ENCODE measurements at regions of chrX and their contacts with region 1.

Region 1: GRCh38 chrX:45843518-45843917 is 642.8 kb upstream of the DIPK2B start:
- DNase-seq: no peak
- ATAC-seq: no peak
- H3K4me3 Mint-ChIP-seq: peak overlapping the region; percentile 36
- H3K27ac Mint-ChIP-seq: peak overlapping the region; percentile 77
- H3K4me1 Mint-ChIP-seq: peaks cover 54% of the 10 kb centered on the region
- H3K27me3 Mint-ChIP-seq: no peaks in the 10 kb centered on the region

Region 2: DNA sequence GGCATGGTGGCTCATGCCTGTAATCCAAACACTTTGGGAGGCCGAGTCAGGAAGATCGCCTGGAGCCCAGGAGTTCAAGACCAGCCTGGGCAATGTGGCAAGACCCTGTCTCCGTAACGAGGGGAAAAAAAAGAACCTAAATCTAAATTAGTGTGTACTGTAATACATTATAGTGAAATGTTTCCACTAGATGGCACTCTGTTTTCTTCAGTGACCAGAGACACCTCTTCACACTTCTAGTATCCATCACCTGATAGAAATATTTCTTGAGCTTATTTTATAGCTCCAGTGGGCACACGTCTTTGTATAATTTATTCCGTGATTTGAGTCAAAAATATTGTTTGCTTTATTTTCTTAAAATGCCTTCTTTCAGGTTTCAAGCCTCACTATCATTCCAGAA is 42.0 kb before region 1 on chrX:
- CTCF ChIA-PET with region 1: interaction called, 4 read pairs
- POLR2A ChIA-PET with region 1: interaction called, 5 read pairs
- intact Hi-C with region 1: loop called in 1 of 2 experiments (anchors 2 kb)
- DNase-seq: no peak
- ATAC-seq: peak; percentile 55
- H3K4me3 Mint-ChIP-seq: peak overlapping the region; percentile 63
- H3K27ac Mint-ChIP-seq: peak overlapping the region; percentile 92
- H3K4me1 Mint-ChIP-seq: peaks cover 71% of the 10 kb centered on the region
- H3K27me3 Mint-ChIP-seq: no peaks in the 10 kb centered on the region

Region 3: GRCh38 chrX:45824471-45824870 is 19.0 kb before region 1 on chrX:
- CTCF ChIA-PET with region 1: interaction called, 4 read pairs
- POLR2A ChIA-PET with region 1: interaction called, 3 read pairs
- intact Hi-C with region 1: loop called in 1 of 2 experiments (anchors 2 kb)
- DNase-seq: peak; percentile 78
- ATAC-seq: peak; percentile 96
- H3K4me3 Mint-ChIP-seq: no peak overlapping the region
- H3K27ac Mint-ChIP-seq: peak overlapping the region; percentile 93
- H3K4me1 Mint-ChIP-seq: peaks cover 57% of the 10 kb centered on the region
- H3K27me3 Mint-ChIP-seq: no peaks in the 10 kb centered on the region

Region 4: DNA sequence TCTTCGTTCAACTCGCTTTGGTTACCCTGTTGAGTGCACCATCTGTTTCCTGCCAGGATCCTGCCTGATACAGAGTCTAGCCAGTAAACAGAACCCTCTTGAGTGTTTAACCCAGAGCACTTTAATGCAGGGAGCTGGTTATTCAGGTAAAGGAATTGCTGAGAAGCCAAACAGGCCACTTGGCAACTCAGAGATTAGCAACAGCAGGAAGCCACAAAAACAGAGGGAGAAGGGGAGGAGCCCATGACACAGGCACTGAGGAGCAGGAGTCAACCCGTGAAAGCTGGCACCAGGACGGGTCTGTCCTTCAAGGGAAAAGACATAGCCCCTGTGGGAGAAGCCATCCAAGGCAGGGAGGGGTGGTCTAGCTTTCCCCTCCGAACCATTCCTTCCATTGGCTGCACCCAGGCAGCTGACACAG is 60.3 kb after region 1 on chrX:
- CTCF ChIA-PET with region 1: no interaction called
- POLR2A ChIA-PET with region 1: no interaction called
- intact Hi-C with region 1: no loop called
- DNase-seq: no peak
- ATAC-seq: no peak
- H3K4me3 Mint-ChIP-seq: no peak overlapping the region
- H3K27ac Mint-ChIP-seq: no peak overlapping the region
- H3K4me1 Mint-ChIP-seq: peaks cover 4% of the 10 kb centered on the region
- H3K27me3 Mint-ChIP-seq: no peaks in the 10 kb centered on the region